HEK293T (cell line): ENCODE measurements at regions of chr15 and their contacts with region 1.

Region 1: DNA sequence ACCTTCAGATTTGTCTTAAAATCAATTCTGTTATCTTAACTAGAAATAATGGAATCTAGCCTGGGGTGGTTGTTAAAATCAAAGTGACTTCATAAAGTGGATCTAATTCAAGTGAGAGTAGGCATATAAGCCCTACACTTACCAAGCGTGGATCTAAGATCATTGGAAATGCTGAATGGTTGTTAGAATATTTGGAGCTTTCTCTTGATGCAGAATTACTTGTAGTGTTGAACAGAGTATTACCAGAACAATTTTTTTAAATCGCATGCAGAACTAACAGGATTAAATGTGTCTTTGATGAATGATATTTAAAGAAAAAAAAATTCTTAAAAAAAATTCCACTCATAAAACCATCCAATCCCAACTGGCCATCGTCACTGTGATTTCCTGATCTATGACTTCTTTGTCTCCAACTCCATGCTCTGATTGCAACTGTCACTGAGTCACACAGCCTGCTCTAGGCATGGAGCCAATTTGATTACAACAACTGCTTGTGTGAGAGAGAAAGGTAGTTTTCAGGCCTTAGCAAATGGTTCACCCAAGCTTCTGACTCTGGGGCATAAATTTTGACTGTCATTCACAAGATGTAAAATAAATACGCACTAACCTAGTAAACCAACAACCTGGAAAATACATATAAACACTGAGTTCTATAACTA is 25.9 kb upstream of the SPRED1 start:
- DNase-seq: no peak

Region 2: DNA sequence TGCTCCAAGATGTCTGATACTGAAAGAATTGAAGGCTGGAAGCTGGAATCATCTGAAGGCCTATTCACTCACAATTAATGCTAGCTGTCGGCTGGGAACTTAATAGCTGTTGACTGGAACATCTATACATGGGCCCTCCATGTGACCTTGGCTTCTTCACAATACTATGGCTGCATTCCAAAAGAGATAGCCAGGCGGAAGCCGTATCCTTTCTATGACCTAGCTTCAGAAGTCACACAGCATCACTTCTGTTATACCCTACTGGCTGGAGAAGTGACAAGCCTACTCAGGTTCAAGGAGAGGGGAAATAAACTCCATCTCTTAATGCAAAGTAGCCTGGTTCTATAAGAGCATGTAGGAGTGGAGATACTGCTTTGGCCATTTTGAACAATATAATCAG is 25.0 kb before region 1 on chr15:
- CTCF ChIA-PET with region 1: no interaction called
- POLR2A ChIA-PET with region 1: no interaction called
- DNase-seq: no peak

Region 3: GRCh38 chr15:38252481-38253412 is 26.0 kb after region 1 on chr15 and contains the start of gene SPRED1:
- CTCF ChIA-PET with region 1: no interaction called
- POLR2A ChIA-PET with region 1: interaction called, 12 read pairs
- DNase-seq: peak; percentile 20